ENCODE measurements at regions of chr12 and their contacts with region 1.

Region 1: GRCh38 chr12:104733717-104734175 is 224.3 kb downstream of the SLC41A2 start:
- DNase-seq: no peak
- ATAC-seq: peak in 3 of 8 donors; percentile 25 to 52 (median 31)
- H3K4me3 ChIP-seq: no peak overlapping the region
- H3K27ac ChIP-seq: no peak overlapping the region
- H3K4me1 ChIP-seq: peaks cover 0 to 43% (median 4%) of the 10 kb centered on the region in 9 donors
- H3K27me3 ChIP-seq: no peaks in the 10 kb centered on the region
- CTCF ChIP-seq: peak in 4 of 9 donors; percentile 25 to 32 (median 28)

Region 2: DNA sequence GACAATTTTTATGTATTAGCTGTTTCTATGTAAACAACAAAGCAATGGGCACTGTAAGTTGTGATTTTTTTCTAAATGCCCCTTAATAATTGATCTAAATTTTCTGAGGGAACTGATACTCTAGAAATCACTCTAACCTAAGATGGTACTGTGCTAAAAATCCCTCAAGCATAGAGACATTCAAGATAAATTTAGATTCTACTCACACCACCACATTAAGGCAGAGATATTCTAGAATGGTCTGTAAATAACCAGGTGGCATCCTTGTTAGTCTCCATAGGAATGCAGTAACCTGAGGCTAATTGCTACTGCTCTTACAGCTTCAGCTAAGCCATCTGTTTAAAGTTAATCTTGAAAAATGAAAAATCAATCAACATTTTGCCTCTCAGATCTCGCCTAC is 137.1 kb after region 1 on chr12:
- intact Hi-C with region 1: loop called in 2 of 10 experiments (anchors 5 to 10 kb)
- DNase-seq: no peak
- ATAC-seq: no peak
- H3K4me3 ChIP-seq: no peak overlapping the region
- H3K27ac ChIP-seq: no peak overlapping the region
- H3K4me1 ChIP-seq: peaks cover 0 to 9% (median 0%) of the 10 kb centered on the region in 9 donors
- H3K27me3 ChIP-seq: no peaks in the 10 kb centered on the region
- CTCF ChIP-seq: no peak